ENCODE measurements at regions of chrX and their contacts with region 1.

Region 1: DNA sequence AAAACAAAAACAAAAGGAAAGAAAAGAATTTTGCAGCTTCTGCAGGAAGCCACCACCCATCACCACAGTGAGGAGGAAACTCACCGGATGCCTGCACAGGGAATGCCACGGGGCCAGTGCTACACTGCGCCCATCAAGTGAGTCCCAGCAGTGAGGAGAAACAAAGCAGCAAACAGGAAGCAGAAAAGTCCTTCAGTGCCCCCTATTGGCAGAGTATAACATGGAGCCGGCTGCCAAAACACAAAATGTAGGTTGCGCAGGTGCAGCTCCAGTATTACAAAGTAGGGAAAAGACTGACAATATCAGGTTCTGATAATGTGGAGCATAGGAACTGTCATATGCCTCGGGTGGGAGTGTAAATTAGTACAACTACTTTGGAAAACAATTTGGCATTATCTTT is 23.3 kb upstream of the SCML2 start:
- DNase-seq: peak in 1 of 2 experiments; percentile 35
- H3K4me3 ChIP-seq: no peak overlapping the region
- H3K4me3 Mint-ChIP-seq: no peak overlapping the region
- H3K27ac Mint-ChIP-seq: no peak overlapping the region
- H3K4me1 ChIP-seq: no peaks in the 10 kb centered on the region
- H3K4me1 Mint-ChIP-seq: no peaks in the 10 kb centered on the region
- H3K27me3 ChIP-seq: no peaks in the 10 kb centered on the region
- H3K27me3 Mint-ChIP-seq: no peaks in the 10 kb centered on the region
- CTCF ChIP-seq: peak; percentile 37 to 44

Region 2: DNA sequence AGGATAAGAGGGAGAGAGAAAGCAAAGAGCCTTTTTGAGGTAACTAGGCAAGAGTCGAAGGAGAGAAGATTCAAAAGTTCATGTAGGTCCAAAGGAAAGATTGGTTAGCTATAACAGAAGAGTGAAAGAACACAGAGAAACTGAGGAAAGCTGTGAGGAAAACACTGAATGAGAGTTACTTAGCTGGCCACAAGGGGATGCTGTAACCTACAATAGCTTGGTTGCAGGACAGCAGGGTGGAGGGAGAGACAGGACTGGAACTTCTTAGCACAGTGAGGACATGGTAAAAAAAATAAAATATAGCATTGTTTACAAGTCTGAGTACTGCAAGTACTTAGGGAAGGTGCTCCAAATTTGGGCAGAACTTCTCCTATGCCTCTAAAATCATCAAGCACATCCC is 565.0 kb before region 1 on chrX:
- CTCF ChIA-PET with region 1: no interaction called
- POLR2A ChIA-PET with region 1: no interaction called
- intact Hi-C with region 1: loop called (anchors 5 kb)
- DNase-seq: no peak
- H3K4me3 ChIP-seq: no peak overlapping the region
- H3K4me3 Mint-ChIP-seq: no peak overlapping the region
- H3K27ac Mint-ChIP-seq: no peak overlapping the region
- H3K4me1 ChIP-seq: no peaks in the 10 kb centered on the region
- H3K4me1 Mint-ChIP-seq: no peaks in the 10 kb centered on the region
- H3K27me3 ChIP-seq: no peaks in the 10 kb centered on the region
- H3K27me3 Mint-ChIP-seq: peaks cover 3% of the 10 kb centered on the region
- CTCF ChIP-seq: peak; percentile 26 to 38

Measured in Caco-2 (cell line).